A673 (cell line): ENCODE measurements at regions of chr1 and their contacts with region 1.

Region 1: GRCh38 chr1:212291505-212292134 is 6.4 kb downstream of the PPP2R5A start:
- DNase-seq: peak; percentile 78
- H3K4me3 ChIP-seq: no peak overlapping the region
- H3K27ac ChIP-seq: no peak overlapping the region
- H3K4me1 ChIP-seq: peaks cover 28% of the 10 kb centered on the region
- H3K27me3 ChIP-seq: no peaks in the 10 kb centered on the region
- CTCF ChIP-seq: peak; percentile 84

Region 2: DNA sequence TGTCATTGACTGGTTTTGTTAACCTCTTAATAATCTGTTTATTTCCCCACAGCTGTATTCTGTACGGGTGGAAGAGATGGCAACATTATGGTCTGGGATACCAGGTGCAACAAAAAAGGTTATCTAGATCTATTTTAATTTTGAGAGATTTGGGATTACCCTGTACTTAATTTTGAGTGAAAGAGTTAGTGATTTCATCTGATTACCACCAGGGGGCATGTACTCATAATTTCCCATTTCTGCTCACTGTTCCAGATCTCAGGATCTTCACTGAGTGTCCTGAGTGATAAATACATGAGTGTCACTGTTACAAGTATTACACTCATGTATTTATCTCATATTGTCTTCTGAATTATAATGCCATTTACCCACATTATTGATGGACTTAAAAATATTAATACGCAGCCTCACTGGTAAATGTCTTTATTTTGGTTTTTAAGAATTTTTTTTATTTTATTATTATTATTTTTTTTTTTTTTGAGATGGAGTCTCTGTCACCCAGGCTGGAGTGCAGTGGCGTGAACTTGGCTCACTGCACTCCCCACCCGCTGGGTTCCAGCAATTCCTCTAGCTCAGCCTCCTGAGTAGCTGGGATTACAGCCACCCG is 228.7 kb before region 1 on chr1:
- CTCF ChIA-PET with region 1: no interaction called
- POLR2A ChIA-PET with region 1: no interaction called
- intact Hi-C with region 1: loop called (anchors 2 kb)
- DNase-seq: peak; percentile 70
- H3K4me3 ChIP-seq: no peak overlapping the region
- H3K27ac ChIP-seq: no peak overlapping the region
- H3K4me1 ChIP-seq: no peaks in the 10 kb centered on the region
- H3K27me3 ChIP-seq: no peaks in the 10 kb centered on the region
- CTCF ChIP-seq: peak; percentile 73